ENCODE measurements at regions of chr3 and their contacts with region 1.

Region 1: GRCh38 chr3:33787328-33788009 is 11.0 kb upstream of the PDCD6IP start:
- DNase-seq: peak; percentile 78
- ATAC-seq: peak; percentile 93
- H3K4me3 ChIP-seq: peak overlapping the region in 2 of 5 experiments; percentile 17 to 34
- H3K4me3 Mint-ChIP-seq: peak overlapping the region; percentile 42
- H3K27ac ChIP-seq: no peak overlapping the region
- H3K27ac Mint-ChIP-seq: no peak overlapping the region
- H3K4me1 ChIP-seq: peaks cover 3 to 4% of the 10 kb centered on the region in 2 donors
- H3K4me1 Mint-ChIP-seq: peaks cover 7% of the 10 kb centered on the region
- H3K27me3 ChIP-seq: no peaks in the 10 kb centered on the region
- H3K27me3 Mint-ChIP-seq: no peaks in the 10 kb centered on the region
- CTCF ChIP-seq: peak; percentile 92

Region 2: DNA sequence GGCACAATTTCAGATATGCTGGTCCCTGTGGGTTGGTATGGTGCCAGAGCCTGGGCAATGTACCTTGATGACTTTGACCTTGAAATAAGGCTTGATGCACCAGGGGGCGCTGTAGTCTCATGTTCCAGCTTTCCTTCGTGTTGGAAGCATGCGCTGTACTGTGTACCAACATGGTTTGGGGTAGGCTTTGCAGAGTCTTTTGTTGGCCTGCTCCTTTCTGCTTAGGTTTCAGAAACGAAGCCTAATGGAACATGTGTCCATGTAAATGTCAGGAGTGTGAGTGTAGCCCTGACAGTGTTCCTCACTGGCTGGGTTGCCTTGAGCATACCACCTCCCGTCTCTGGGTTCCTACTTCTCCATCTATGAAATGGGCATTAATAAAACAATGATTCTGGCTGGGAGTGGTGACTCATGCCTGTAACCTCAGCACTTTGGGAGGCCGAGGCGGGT is 839.7 kb before region 1 on chr3:
- CTCF ChIA-PET with region 1: interaction called, 14 read pairs
- POLR2A ChIA-PET with region 1: no interaction called
- intact Hi-C with region 1: no loop called
- DNase-seq: peak; percentile 88
- ATAC-seq: peak; percentile 83
- H3K4me3 ChIP-seq: no peak overlapping the region
- H3K4me3 Mint-ChIP-seq: no peak overlapping the region
- H3K27ac ChIP-seq: no peak overlapping the region
- H3K27ac Mint-ChIP-seq: no peak overlapping the region
- H3K4me1 ChIP-seq: peaks cover 0 to 18% of the 10 kb centered on the region in 2 donors
- H3K4me1 Mint-ChIP-seq: peaks cover 13% of the 10 kb centered on the region
- H3K27me3 ChIP-seq: no peaks in the 10 kb centered on the region
- H3K27me3 Mint-ChIP-seq: no peaks in the 10 kb centered on the region
- CTCF ChIP-seq: peak; percentile 87

Region 3: GRCh38 chr3:33372218-33373081 is 415.0 kb before region 1 on chr3:
- CTCF ChIA-PET with region 1: interaction called, 24 read pairs
- POLR2A ChIA-PET with region 1: no interaction called
- intact Hi-C with region 1: no loop called
- DNase-seq: peak; percentile 68
- ATAC-seq: peak; percentile 49
- H3K4me3 ChIP-seq: no peak overlapping the region
- H3K4me3 Mint-ChIP-seq: no peak overlapping the region
- H3K27ac ChIP-seq: no peak overlapping the region
- H3K27ac Mint-ChIP-seq: no peak overlapping the region
- H3K4me1 ChIP-seq: peaks cover 4 to 6% of the 10 kb centered on the region in 2 donors
- H3K4me1 Mint-ChIP-seq: peaks cover 3% of the 10 kb centered on the region
- H3K27me3 ChIP-seq: peaks cover 0 to 5% (median 1%) of the 10 kb centered on the region in 4 experiments
- H3K27me3 Mint-ChIP-seq: peaks cover 20% of the 10 kb centered on the region
- CTCF ChIP-seq: peak; percentile 93

Region 4: DNA sequence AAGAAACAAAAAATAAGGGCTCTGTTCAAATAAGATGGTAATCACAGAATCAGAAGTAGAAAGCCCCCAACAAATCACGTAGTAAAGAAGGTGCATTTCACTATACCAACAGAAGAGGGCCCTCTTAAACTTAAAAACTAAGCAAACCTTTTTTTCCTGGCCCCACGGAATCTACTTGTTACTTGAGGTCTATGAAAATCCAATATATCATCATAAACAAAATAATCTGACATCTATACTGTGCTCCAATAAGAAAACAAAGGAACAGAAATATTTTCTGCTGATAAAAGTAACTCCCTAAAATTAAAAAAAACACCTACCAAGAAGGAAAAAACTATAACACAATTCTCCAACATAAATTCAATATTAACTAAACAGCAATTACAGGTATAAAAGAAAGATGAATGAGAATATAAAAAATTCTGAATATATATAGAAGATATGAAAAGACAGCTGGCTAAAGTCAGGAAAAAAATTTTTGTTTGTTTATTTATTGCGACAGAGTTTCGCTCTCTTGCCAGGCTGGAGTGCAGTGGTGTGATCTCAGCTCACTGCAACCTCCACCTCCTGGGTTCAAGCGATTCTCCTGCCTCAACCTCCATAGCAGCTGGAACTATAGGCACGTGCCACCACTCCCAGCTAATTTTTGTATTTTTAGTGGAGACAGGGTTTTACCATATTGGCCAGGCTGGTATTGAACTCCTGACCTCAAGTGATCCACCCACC is 151.2 kb before region 1 on chr3:
- CTCF ChIA-PET with region 1: interaction called, 44 read pairs
- POLR2A ChIA-PET with region 1: no interaction called
- intact Hi-C with region 1: loop called (anchors 1 kb)
- DNase-seq: peak; percentile 58
- ATAC-seq: no peak
- H3K4me3 ChIP-seq: no peak overlapping the region
- H3K4me3 Mint-ChIP-seq: no peak overlapping the region
- H3K27ac ChIP-seq: no peak overlapping the region
- H3K27ac Mint-ChIP-seq: no peak overlapping the region
- H3K4me1 ChIP-seq: no peaks in the 10 kb centered on the region
- H3K4me1 Mint-ChIP-seq: no peaks in the 10 kb centered on the region
- H3K27me3 ChIP-seq: no peaks in the 10 kb centered on the region
- H3K27me3 Mint-ChIP-seq: no peaks in the 10 kb centered on the region
- CTCF ChIP-seq: peak; percentile 76

Region 5: DNA sequence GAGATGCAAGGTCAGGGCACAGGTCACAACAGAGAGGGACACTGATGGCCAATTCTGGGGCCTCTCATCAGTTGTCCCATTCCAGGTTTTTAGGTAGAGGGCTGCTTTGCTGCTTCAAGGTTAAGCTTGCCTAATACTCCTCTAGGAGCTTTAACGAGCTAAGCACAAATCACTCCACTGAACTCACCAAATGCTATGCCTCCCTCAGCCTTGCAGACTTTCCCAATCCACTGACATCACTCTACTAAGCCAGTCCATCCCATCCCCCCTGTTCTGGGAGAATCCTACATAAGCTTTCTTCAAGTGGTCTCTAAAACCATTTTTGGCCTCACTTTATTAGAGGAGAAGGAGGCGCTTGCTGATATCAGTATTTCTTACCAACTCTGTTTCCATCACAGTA is 13.8 kb before region 1 on chr3:
- CTCF ChIA-PET with region 1: interaction called, 32 read pairs
- POLR2A ChIA-PET with region 1: no interaction called
- intact Hi-C with region 1: no loop called
- DNase-seq: no peak
- ATAC-seq: no peak
- H3K4me3 ChIP-seq: no peak overlapping the region
- H3K4me3 Mint-ChIP-seq: no peak overlapping the region
- H3K27ac ChIP-seq: no peak overlapping the region
- H3K27ac Mint-ChIP-seq: no peak overlapping the region
- H3K4me1 ChIP-seq: no peaks in the 10 kb centered on the region
- H3K4me1 Mint-ChIP-seq: no peaks in the 10 kb centered on the region
- H3K27me3 ChIP-seq: no peaks in the 10 kb centered on the region
- H3K27me3 Mint-ChIP-seq: peaks cover 5% of the 10 kb centered on the region
- CTCF ChIP-seq: no peak

Region 6: GRCh38 chr3:33798411-33799201 is 11.1 kb after region 1 on chr3 and contains the start of gene PDCD6IP:
- CTCF ChIA-PET with region 1: interaction called, 37 read pairs
- POLR2A ChIA-PET with region 1: no interaction called
- intact Hi-C with region 1: no loop called
- DNase-seq: peak; percentile 95
- ATAC-seq: peak; percentile 86
- H3K4me3 ChIP-seq: peak within 1 kb of the TSS; percentile 89 to 94 (median 93)
- H3K4me3 Mint-ChIP-seq: peak within 1 kb of the TSS; percentile 99
- H3K27ac ChIP-seq: peak within 1 kb of the TSS; percentile 84 to 86
- H3K27ac Mint-ChIP-seq: peak within 1 kb of the TSS; percentile 96
- H3K4me1 ChIP-seq: peaks cover 28 to 32% of the 10 kb centered on the region in 2 donors
- H3K4me1 Mint-ChIP-seq: peaks cover 46% of the 10 kb centered on the region
- H3K27me3 ChIP-seq: no peaks in the 10 kb centered on the region
- H3K27me3 Mint-ChIP-seq: no peaks in the 10 kb centered on the region
- CTCF ChIP-seq: peak; percentile 25
- total RNA-seq, gene PDCD6IP: 276 TPM in 2 replicates